ENCODE measurements at regions of chr2 and their contacts with region 1.

Region 1: DNA sequence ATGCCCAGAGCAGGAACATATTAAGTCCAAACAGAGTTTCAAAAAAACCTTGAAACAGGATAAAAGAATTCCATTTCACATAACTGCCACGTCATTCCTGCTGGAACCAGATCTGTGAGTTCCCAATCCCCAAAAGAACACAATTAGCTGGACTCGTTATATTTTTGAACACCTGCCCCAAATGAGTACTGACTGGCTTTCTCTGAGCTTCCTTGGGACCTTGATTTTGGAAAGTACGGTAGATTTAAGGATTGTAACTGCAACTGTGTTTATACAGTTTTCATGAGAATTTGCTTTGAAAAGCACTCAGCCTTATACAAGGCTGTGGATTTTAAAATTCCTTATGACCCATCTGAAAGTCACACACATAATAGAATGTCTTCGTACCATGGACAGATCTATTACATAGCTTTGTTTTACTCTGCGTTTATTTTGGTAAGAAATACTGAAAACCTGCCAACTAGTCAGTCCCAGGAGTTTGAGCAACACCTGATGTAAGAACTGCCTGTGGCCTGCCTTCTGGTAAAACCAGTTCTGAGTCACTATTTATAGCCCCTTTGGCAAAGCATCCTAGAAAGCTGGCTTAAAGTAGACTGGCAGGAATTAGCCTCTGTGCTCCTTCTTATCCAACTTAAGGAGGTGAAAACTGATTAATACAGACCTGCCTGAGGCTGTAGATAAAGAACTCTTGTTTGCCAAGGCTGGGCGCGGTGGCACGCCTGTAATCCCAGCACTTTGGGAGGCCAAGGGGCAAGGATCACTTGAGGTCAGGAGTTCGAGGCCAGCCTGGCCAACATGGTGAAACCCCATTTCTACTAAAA is 48.1 kb downstream of the MERTK start:
- DNase-seq: peak; percentile 94
- H3K4me3 ChIP-seq: no peak overlapping the region
- H3K27ac ChIP-seq: no peak overlapping the region
- H3K4me1 ChIP-seq: peaks cover 16% of the 10 kb centered on the region
- H3K27me3 ChIP-seq: peaks cover 4% of the 10 kb centered on the region
- CTCF ChIP-seq: no peak

Region 2: GRCh38 chr2:111975053-111975552 is 28.6 kb after region 1 on chr2:
- CTCF ChIA-PET with region 1: no interaction called
- dilution Hi-C with region 1: no loop called
- in situ Hi-C with region 1: no loop called
- intact Hi-C with region 1: loop called (anchors 2 kb)
- DNase-seq: peak; percentile 98
- H3K4me3 ChIP-seq: no peak overlapping the region
- H3K27ac ChIP-seq: no peak overlapping the region
- H3K4me1 ChIP-seq: peaks cover 15% of the 10 kb centered on the region
- H3K27me3 ChIP-seq: peaks cover 11% of the 10 kb centered on the region
- CTCF ChIP-seq: no peak

Region 3: DNA sequence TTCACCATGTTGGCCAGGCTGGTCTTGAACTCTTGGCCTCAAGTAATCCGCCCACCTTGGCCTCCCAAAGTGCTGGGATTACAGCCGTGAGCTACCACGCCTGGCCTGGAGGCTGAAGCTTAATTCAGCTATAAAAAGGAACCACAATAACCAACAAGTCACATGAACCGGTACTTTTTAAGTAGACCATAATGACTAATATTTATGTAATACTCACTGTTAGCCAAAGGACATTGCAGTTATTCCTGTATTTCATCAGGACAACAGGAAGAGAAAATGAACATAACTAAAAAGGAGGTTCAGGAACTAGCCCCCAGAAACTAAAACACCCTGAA is 59.5 kb after region 1 on chr2:
- CTCF ChIA-PET with region 1: no interaction called
- dilution Hi-C with region 1: no loop called
- in situ Hi-C with region 1: no loop called
- intact Hi-C with region 1: loop called (anchors 2 kb)
- DNase-seq: peak; percentile 82
- H3K4me3 ChIP-seq: no peak overlapping the region
- H3K27ac ChIP-seq: no peak overlapping the region
- H3K4me1 ChIP-seq: peaks cover 5% of the 10 kb centered on the region
- H3K27me3 ChIP-seq: peaks cover 17% of the 10 kb centered on the region
- CTCF ChIP-seq: no peak

Region 4: GRCh38 chr2:112032689-112033465 is 86.4 kb after region 1 on chr2:
- CTCF ChIA-PET with region 1: no interaction called
- dilution Hi-C with region 1: no loop called
- in situ Hi-C with region 1: no loop called
- intact Hi-C with region 1: loop called (anchors 1 kb)
- DNase-seq: peak; percentile 91
- H3K4me3 ChIP-seq: no peak overlapping the region
- H3K27ac ChIP-seq: peak overlapping the region; percentile 17
- H3K4me1 ChIP-seq: peaks cover 29% of the 10 kb centered on the region
- H3K27me3 ChIP-seq: no peaks in the 10 kb centered on the region
- CTCF ChIP-seq: peak in 1 of 2 donors; percentile 16